ENCODE measurements at regions of chr6 and their contacts with region 1.

Region 1: DNA sequence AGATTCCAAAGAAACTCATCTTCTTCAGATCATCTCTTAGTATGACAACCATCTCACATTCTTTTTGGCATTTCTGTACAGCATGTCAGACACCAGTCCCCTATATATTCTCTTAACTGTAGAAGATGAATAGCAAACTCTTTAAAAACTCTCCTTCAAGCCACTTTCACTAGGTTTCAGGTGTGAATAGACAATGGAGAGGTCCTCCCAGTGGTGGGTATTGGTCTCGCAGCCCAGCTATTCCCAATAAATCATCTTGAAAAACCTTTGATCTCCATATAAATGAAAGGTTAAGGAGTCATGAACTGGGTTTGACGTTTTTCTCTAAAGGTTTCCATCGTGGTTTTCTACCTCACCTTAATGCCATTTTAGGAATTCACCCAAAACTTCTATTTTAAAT is 180.0 kb downstream of the GJA1 start:
- DNase-seq: peak; percentile 21
- H3K4me3 ChIP-seq: no peak overlapping the region
- H3K27ac ChIP-seq: no peak overlapping the region
- H3K4me1 ChIP-seq: no peaks in the 10 kb centered on the region
- H3K27me3 ChIP-seq: no peaks in the 10 kb centered on the region
- CTCF ChIP-seq: peak; percentile 4 to 15
- POLR2A ChIP-seq: no peak

Region 2: DNA sequence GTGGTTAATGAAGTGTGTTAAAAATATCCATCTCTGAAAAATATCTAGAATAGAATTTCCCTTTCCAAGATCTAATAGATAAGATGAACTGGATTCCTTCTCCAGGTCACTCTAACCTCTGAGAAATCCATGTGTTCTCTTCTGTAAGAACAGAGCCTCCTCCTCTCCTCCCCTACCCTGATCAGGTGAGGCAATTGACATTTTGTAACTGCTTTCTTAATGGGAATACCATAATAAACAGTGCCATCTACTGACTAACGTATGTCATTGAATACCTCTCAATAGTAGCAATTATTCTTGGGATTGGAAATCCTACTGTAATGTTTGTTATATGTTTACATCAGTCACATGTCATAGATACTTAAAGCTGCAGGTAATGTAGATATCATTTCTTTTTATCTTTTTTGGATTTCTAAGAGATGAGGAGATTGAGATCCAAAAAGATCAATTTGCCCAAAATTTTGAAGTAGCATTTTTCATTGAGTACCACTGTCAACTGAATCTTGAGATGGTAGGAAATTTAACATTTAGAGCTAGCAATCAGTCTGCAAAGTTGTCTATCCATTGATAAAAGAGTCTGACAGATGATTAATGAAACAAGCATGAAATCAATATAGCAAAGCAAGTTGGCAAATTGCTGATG is 418.2 kb after region 1 on chr6:
- CTCF ChIA-PET with region 1: no interaction called
- POLR2A ChIA-PET with region 1: no interaction called
- dilution Hi-C with region 1: no loop called
- intact Hi-C with region 1: loop called (anchors 10 kb)
- DNase-seq: peak; percentile 69
- H3K4me3 ChIP-seq: no peak overlapping the region
- H3K27ac ChIP-seq: no peak overlapping the region
- H3K4me1 ChIP-seq: no peaks in the 10 kb centered on the region
- H3K27me3 ChIP-seq: no peaks in the 10 kb centered on the region
- CTCF ChIP-seq: peak; percentile 35 to 51
- POLR2A ChIP-seq: no peak